Panc1 (cell line): ENCODE measurements at regions of chr15 and their contacts with region 1.

Region 1: GRCh38 chr15:75884041-75884440 is 19.6 kb upstream of the FBXO22 start:
- DNase-seq: no peak
- ATAC-seq: no peak
- H3K4me3 ChIP-seq: no peak overlapping the region
- H3K27ac ChIP-seq: no peak overlapping the region
- H3K4me1 ChIP-seq: no peaks in the 10 kb centered on the region
- H3K27me3 ChIP-seq: no peaks in the 10 kb centered on the region
- CTCF ChIP-seq: no peak

Region 2: DNA sequence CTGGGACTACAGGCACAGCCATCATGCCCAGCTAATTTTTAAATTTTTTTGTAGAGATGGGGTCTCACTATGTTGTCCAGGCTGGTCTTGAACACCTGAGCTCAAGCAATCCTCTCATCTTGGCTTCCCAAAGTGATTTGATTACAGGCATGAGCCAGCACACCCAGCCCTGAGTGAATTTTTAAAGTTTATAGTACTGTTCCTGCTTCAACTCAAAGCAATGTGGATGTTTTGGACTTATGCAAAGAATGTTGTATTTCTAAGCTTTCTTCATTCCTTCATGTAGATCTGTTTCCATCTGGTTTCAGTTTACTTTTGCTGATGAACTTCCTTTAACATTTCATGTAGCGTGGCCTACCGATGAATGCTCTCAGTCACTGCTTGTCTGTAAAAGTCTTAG is 104.9 kb after region 1 on chr15:
- CTCF ChIA-PET with region 1: no interaction called
- POLR2A ChIA-PET with region 1: interaction called, 17 read pairs
- in situ Hi-C with region 1: no loop called
- intact Hi-C with region 1: no loop called
- DNase-seq: no peak
- ATAC-seq: no peak
- H3K4me3 ChIP-seq: no peak overlapping the region
- H3K27ac ChIP-seq: no peak overlapping the region
- H3K4me1 ChIP-seq: no peaks in the 10 kb centered on the region
- H3K27me3 ChIP-seq: no peaks in the 10 kb centered on the region
- CTCF ChIP-seq: no peak